ENCODE measurements at regions of chr6 and their contacts with region 1.

Region 1: GRCh38 chr6:125584468-125585029 is 164.9 kb upstream of the HEY2 start:
- DNase-seq: peak; percentile 13
- H3K4me3 ChIP-seq: no peak overlapping the region
- H3K27ac ChIP-seq: no peak overlapping the region
- H3K4me1 ChIP-seq: peaks cover 41% of the 10 kb centered on the region
- H3K27me3 ChIP-seq: peaks cover 0 to 22% of the 10 kb centered on the region in 2 experiments
- CTCF ChIP-seq: no peak
- POLR2A ChIP-seq: no peak

Region 2: DNA sequence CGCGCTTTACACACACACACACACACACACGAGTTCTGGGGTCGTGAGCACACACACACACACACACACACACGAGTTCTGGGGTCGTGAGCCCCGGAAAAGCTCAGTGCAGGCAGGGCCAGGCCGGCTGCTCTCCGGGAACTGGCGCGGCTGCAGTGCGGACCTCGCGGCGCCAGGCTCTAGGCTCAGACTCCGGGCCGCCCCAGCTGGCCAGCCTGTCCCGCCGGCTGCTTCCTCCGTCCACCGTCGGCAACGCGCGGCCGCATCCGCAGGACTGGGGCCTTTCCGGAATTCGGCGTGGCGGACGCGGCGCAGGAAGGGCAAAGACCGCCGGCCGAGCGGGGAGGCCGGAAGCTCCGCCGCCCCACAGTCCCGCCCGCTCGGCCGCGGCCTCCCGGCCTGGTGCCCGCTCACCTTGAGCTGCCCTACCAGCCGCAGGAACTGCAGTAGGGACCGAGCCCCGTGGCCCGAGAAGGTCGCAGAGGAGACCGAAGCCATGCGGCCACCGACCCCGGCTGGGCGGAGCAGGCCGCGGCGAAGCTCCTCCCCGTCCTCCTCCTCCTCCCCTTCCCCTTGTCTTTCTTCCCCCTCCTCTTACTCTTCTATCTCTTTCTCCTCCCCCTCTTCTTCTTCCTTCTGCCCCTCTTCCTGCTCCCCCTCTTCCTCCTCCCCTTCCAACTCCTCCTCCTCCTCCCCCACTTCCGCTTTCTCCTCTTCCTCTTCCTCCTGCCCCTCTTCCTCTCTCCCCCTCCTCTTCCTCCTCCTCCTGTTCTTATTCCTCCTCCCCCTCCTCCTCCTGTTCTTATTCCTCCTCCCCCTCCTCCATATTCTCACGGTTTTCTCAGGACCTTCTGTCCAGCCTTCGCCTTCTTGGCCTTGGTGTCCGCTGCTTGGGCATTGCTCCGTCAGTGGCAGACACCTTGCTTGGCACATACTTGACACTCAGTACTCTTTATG is 282.8 kb before region 1 on chr6 and contains the start of gene HDDC2:
- CTCF ChIA-PET with region 1: no interaction called
- POLR2A ChIA-PET with region 1: no interaction called
- dilution Hi-C with region 1: no loop called
- intact Hi-C with region 1: loop called (anchors 1 kb)
- DNase-seq: peak; percentile 78
- H3K4me3 ChIP-seq: peak within 1 kb of the TSS; percentile 10 to 56 (median 47)
- H3K27ac ChIP-seq: peak within 1 kb of the TSS; percentile 72
- H3K4me1 ChIP-seq: peaks cover 10% of the 10 kb centered on the region
- H3K27me3 ChIP-seq: peaks cover 8 to 12% of the 10 kb centered on the region in 2 experiments
- CTCF ChIP-seq: no peak
- POLR2A ChIP-seq: peak; percentile 49
- total RNA-seq, gene HDDC2: 12.6 and 13.6 TPM in 2 replicates

Region 3: GRCh38 chr6:125363039-125363823 is 221.3 kb before region 1 on chr6:
- CTCF ChIA-PET with region 1: no interaction called
- POLR2A ChIA-PET with region 1: no interaction called
- dilution Hi-C with region 1: no loop called
- intact Hi-C with region 1: loop called (anchors 1 kb)
- DNase-seq: peak; percentile 64
- H3K4me3 ChIP-seq: peak overlapping the region; percentile 31 to 63 (median 42)
- H3K27ac ChIP-seq: peak overlapping the region; percentile 58
- H3K4me1 ChIP-seq: peaks cover 16% of the 10 kb centered on the region
- H3K27me3 ChIP-seq: peaks cover 15 to 27% of the 10 kb centered on the region in 2 experiments
- CTCF ChIP-seq: no peak
- POLR2A ChIP-seq: no peak

Region 4: DNA sequence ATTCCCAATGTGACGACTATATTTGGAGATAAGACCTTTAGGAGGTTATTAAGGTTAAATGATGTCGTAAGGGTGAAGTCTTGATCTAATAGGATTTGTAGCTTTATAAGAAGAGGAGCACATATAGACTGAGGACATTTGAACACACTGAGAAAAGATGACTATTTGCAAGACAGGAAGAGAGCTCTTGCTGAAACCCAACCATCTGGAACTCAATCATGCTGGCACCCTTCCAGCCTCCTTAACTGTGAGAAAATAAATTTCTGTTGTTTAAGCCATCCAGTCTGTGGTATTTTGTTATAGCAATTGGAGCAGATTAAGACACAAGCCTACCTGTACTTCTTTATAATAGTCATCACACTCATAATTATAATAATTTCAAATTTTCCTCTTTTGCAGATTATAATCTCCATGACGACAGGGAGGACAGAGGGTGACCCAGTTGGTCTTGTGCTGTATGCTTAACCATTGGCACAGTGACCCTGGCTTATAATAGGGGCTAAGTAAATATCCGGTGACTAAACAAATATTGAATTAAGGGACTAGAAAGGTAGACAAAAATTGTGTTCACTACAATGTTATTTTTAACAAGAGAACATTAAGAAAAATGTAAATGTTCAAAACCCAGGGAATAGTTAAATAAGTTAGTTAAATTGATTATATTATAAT is 76.4 kb before region 1 on chr6:
- CTCF ChIA-PET with region 1: no interaction called
- POLR2A ChIA-PET with region 1: no interaction called
- dilution Hi-C with region 1: no loop called
- intact Hi-C with region 1: no loop called
- DNase-seq: peak; percentile 6
- H3K4me3 ChIP-seq: no peak overlapping the region
- H3K27ac ChIP-seq: no peak overlapping the region
- H3K4me1 ChIP-seq: no peaks in the 10 kb centered on the region
- H3K27me3 ChIP-seq: peaks cover 0 to 7% of the 10 kb centered on the region in 2 experiments
- CTCF ChIP-seq: no peak
- POLR2A ChIP-seq: no peak

Region 5: GRCh38 chr6:125533710-125534397 is 50.7 kb before region 1 on chr6:
- CTCF ChIA-PET with region 1: no interaction called
- POLR2A ChIA-PET with region 1: no interaction called
- dilution Hi-C with region 1: no loop called
- intact Hi-C with region 1: loop called (anchors 1 kb)
- DNase-seq: peak; percentile 8
- H3K4me3 ChIP-seq: peak overlapping the region in 2 of 3 experiments; percentile 27 to 44
- H3K27ac ChIP-seq: peak overlapping the region; percentile 28
- H3K4me1 ChIP-seq: peaks cover 14% of the 10 kb centered on the region
- H3K27me3 ChIP-seq: peaks cover 4 to 29% of the 10 kb centered on the region in 2 experiments
- CTCF ChIP-seq: no peak
- POLR2A ChIP-seq: no peak

Region 6: DNA sequence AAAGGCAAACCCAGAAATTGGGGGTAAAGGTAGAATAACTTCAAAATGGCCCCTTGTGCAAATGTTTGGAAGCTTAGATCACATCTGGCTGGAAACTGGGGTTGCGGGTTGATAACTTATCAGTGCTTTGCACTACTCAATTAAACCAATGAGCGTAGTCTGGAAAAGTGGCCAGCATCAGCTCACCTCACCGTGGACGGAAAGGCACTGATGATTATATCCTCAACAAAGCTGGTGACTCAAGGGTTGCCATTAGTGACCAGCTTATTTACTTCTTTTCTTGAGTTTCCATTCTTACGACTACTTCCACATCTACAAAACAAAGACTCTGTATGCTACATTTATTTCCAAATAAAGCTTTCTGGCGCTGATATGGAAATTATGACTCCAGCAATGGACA is 33.7 kb before region 1 on chr6:
- CTCF ChIA-PET with region 1: interaction called, 3 read pairs
- POLR2A ChIA-PET with region 1: no interaction called
- dilution Hi-C with region 1: no loop called
- intact Hi-C with region 1: loop called (anchors 2 kb)
- DNase-seq: peak; percentile 18
- H3K4me3 ChIP-seq: no peak overlapping the region
- H3K27ac ChIP-seq: no peak overlapping the region
- H3K4me1 ChIP-seq: peaks cover 5% of the 10 kb centered on the region
- H3K27me3 ChIP-seq: peaks cover 2 to 11% of the 10 kb centered on the region in 2 experiments
- CTCF ChIP-seq: no peak
- POLR2A ChIP-seq: no peak

Region 7: DNA sequence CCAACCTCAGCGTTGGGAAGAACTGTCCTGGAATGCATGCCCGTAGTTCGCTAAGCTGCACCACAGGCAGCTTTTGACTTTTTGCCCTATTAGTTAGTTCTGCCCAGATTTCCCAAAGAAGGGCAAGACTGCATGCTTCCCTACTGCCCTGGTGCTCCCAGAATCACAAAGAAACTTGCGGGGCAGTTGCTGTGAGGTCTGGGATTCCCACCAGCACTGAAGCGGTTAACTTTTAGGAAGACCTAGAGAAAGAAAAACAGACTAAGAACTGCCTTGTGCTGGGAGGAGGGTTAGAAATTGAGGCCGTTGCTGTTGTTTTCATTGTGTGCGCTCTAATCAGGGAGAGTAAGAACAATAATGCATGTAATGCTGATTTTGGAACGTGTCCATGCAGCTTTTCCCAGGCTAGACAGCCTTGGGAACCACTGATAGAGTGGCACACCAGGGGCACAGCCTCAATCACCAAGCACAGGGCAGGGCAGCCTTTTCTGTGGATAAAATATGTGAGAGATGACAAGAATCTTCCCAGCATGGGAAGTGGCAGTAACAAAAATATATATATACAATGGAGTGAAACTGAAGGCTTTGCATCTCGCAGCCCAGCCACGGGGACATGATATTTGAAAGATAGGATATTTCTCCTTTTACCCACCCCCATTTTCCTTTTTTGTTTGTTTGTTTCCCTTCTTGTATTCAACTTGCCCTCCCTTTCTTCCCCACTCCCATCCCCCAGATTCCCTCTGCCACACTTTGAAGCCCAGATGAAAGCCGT is 27.2 kb after region 1 on chr6:
- CTCF ChIA-PET with region 1: no interaction called
- POLR2A ChIA-PET with region 1: no interaction called
- dilution Hi-C with region 1: no loop called
- intact Hi-C with region 1: loop called (anchors 1 kb)
- DNase-seq: peak; percentile 96
- H3K4me3 ChIP-seq: peak overlapping the region in 1 of 3 experiments; percentile 4
- H3K27ac ChIP-seq: peak overlapping the region; percentile 62
- H3K4me1 ChIP-seq: peaks cover 17% of the 10 kb centered on the region
- H3K27me3 ChIP-seq: peaks cover 0 to 9% of the 10 kb centered on the region in 2 experiments
- CTCF ChIP-seq: no peak
- POLR2A ChIP-seq: no peak

Region 8: DNA sequence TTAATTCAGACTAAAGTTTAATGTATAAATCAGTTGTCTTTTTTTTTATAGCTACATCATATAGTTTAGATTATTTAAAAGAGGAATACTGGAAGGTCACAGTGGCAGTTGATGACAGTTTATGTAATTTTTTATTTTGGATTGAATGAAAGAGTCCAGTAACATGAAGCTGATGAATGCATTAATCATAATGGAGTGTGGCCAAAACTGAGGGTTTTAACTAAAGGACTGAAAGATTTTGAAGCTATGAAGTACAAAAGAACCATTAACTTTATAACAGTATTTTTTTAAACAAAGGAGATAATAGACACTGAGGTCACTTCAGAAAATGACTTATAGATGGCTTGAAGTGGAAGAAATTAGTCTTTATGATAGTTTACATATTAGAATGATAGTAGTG is 443.1 kb after region 1 on chr6:
- CTCF ChIA-PET with region 1: no interaction called
- POLR2A ChIA-PET with region 1: no interaction called
- dilution Hi-C with region 1: no loop called
- intact Hi-C with region 1: no loop called
- DNase-seq: no peak
- H3K4me3 ChIP-seq: no peak overlapping the region
- H3K27ac ChIP-seq: no peak overlapping the region
- H3K4me1 ChIP-seq: no peaks in the 10 kb centered on the region
- H3K27me3 ChIP-seq: no peaks in the 10 kb centered on the region
- CTCF ChIP-seq: no peak
- POLR2A ChIP-seq: no peak

Region 9: GRCh38 chr6:126176282-126176681 is 591.7 kb after region 1 on chr6:
- CTCF ChIA-PET with region 1: no interaction called
- POLR2A ChIA-PET with region 1: no interaction called
- dilution Hi-C with region 1: no loop called
- intact Hi-C with region 1: no loop called
- DNase-seq: peak; percentile 51
- H3K4me3 ChIP-seq: no peak overlapping the region
- H3K27ac ChIP-seq: no peak overlapping the region
- H3K4me1 ChIP-seq: no peaks in the 10 kb centered on the region
- H3K27me3 ChIP-seq: no peaks in the 10 kb centered on the region
- CTCF ChIP-seq: peak; percentile 17 to 42
- POLR2A ChIP-seq: no peak